ENCODE measurements at regions of chr10 and their contacts with region 1.

Region 1: GRCh38 chr10:21304203-21304602 is 221.3 kb downstream of the SKIDA1 start:
- DNase-seq: peak; percentile 83 to 86
- H3K4me3 ChIP-seq: no peak overlapping the region
- H3K4me3 Mint-ChIP-seq: peak overlapping the region; percentile 46
- H3K27ac Mint-ChIP-seq: peak overlapping the region; percentile 93
- H3K4me1 ChIP-seq: peaks cover 27% of the 10 kb centered on the region
- H3K4me1 Mint-ChIP-seq: peaks cover 41% of the 10 kb centered on the region
- H3K27me3 ChIP-seq: no peaks in the 10 kb centered on the region
- H3K27me3 Mint-ChIP-seq: no peaks in the 10 kb centered on the region
- CTCF ChIP-seq: no peak

Region 2: GRCh38 chr10:21166557-21167287 is 137.5 kb before region 1 on chr10:
- CTCF ChIA-PET with region 1: no interaction called
- POLR2A ChIA-PET with region 1: no interaction called
- intact Hi-C with region 1: no loop called
- DNase-seq: no peak
- H3K4me3 ChIP-seq: no peak overlapping the region
- H3K4me3 Mint-ChIP-seq: no peak overlapping the region
- H3K27ac Mint-ChIP-seq: no peak overlapping the region
- H3K4me1 ChIP-seq: peaks cover 53% of the 10 kb centered on the region
- H3K4me1 Mint-ChIP-seq: peaks cover 43% of the 10 kb centered on the region
- H3K27me3 ChIP-seq: no peaks in the 10 kb centered on the region
- H3K27me3 Mint-ChIP-seq: no peaks in the 10 kb centered on the region
- CTCF ChIP-seq: no peak

Region 3: DNA sequence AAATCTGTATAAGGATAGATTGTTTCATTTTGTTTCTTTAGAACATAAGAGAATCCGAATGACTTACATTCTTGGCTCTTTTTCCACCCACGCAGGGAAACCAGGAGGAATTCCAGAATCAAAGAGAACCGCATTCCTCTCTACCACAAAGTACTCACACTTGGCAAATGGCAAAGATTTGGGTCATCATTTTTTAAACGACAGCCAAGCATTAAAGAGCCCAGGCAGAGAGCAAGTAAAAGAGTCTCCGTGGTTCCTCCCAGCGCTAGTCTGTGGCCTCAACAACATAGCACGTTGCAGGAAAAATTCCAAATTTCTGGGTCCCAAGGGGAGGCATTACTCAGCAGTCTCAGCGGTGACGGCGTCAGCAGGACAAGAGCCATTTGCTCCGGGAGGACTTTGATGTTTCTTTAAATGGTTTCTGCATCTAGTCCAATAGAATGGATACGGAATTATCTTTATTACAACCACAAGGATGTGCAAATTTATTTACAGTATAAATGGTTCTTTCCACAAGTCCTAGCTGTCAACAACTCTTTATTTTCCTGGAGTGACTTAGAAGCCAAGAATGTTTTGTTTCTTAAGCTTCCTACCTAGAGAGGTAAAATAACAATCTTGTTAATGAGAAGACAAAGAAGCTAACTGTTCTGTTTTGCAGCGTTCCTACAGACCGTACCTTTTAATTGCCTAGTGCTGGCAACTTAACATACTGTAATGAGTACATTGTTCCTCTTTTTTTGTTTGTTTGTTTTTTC is 11.3 kb before region 1 on chr10:
- CTCF ChIA-PET with region 1: no interaction called
- POLR2A ChIA-PET with region 1: no interaction called
- intact Hi-C with region 1: loop called (anchors 1 kb)
- DNase-seq: peak; percentile 85
- H3K4me3 ChIP-seq: peak overlapping the region; percentile 29
- H3K4me3 Mint-ChIP-seq: peak overlapping the region; percentile 73
- H3K27ac Mint-ChIP-seq: peak overlapping the region; percentile 65
- H3K4me1 ChIP-seq: peaks cover 48% of the 10 kb centered on the region
- H3K4me1 Mint-ChIP-seq: peaks cover 40% of the 10 kb centered on the region
- H3K27me3 ChIP-seq: no peaks in the 10 kb centered on the region
- H3K27me3 Mint-ChIP-seq: no peaks in the 10 kb centered on the region
- CTCF ChIP-seq: no peak

Region 4: GRCh38 chr10:21315645-21316281 is 11.6 kb after region 1 on chr10:
- CTCF ChIA-PET with region 1: no interaction called
- POLR2A ChIA-PET with region 1: no interaction called
- intact Hi-C with region 1: loop called (anchors 1 kb)
- DNase-seq: peak; percentile 73 to 81
- H3K4me3 ChIP-seq: no peak overlapping the region
- H3K4me3 Mint-ChIP-seq: peak overlapping the region; percentile 28
- H3K27ac Mint-ChIP-seq: peak overlapping the region; percentile 75
- H3K4me1 ChIP-seq: peaks cover 31% of the 10 kb centered on the region
- H3K4me1 Mint-ChIP-seq: peaks cover 40% of the 10 kb centered on the region
- H3K27me3 ChIP-seq: no peaks in the 10 kb centered on the region
- H3K27me3 Mint-ChIP-seq: no peaks in the 10 kb centered on the region
- CTCF ChIP-seq: no peak

Region 5: GRCh38 chr10:21336476-21337170 is 32.4 kb after region 1 on chr10:
- CTCF ChIA-PET with region 1: no interaction called
- POLR2A ChIA-PET with region 1: interaction called, 4 read pairs
- intact Hi-C with region 1: loop called (anchors 1 kb)
- DNase-seq: peak; percentile 90 to 94
- H3K4me3 ChIP-seq: no peak overlapping the region
- H3K4me3 Mint-ChIP-seq: peak overlapping the region; percentile 30
- H3K27ac Mint-ChIP-seq: peak overlapping the region; percentile 91
- H3K4me1 ChIP-seq: peaks cover 47% of the 10 kb centered on the region
- H3K4me1 Mint-ChIP-seq: peaks cover 31% of the 10 kb centered on the region
- H3K27me3 ChIP-seq: no peaks in the 10 kb centered on the region
- H3K27me3 Mint-ChIP-seq: no peaks in the 10 kb centered on the region
- CTCF ChIP-seq: peak; percentile 11 to 19

Region 6: GRCh38 chr10:21355561-21356011 is 51.4 kb after region 1 on chr10:
- CTCF ChIA-PET with region 1: no interaction called
- POLR2A ChIA-PET with region 1: no interaction called
- intact Hi-C with region 1: loop called (anchors 1 kb)
- DNase-seq: no peak
- H3K4me3 ChIP-seq: no peak overlapping the region
- H3K4me3 Mint-ChIP-seq: no peak overlapping the region
- H3K27ac Mint-ChIP-seq: peak overlapping the region; percentile 4
- H3K4me1 ChIP-seq: peaks cover 41% of the 10 kb centered on the region
- H3K4me1 Mint-ChIP-seq: peaks cover 43% of the 10 kb centered on the region
- H3K27me3 ChIP-seq: no peaks in the 10 kb centered on the region
- H3K27me3 Mint-ChIP-seq: no peaks in the 10 kb centered on the region
- CTCF ChIP-seq: no peak

Region 7: GRCh38 chr10:21406595-21407193 is 102.5 kb after region 1 on chr10:
- CTCF ChIA-PET with region 1: no interaction called
- POLR2A ChIA-PET with region 1: interaction called, 11 read pairs
- intact Hi-C with region 1: no loop called
- DNase-seq: no peak
- H3K4me3 ChIP-seq: no peak overlapping the region
- H3K4me3 Mint-ChIP-seq: no peak overlapping the region
- H3K27ac Mint-ChIP-seq: peak overlapping the region; percentile 2
- H3K4me1 ChIP-seq: peaks cover 48% of the 10 kb centered on the region
- H3K4me1 Mint-ChIP-seq: peaks cover 33% of the 10 kb centered on the region
- H3K27me3 ChIP-seq: no peaks in the 10 kb centered on the region
- H3K27me3 Mint-ChIP-seq: no peaks in the 10 kb centered on the region
- CTCF ChIP-seq: no peak

Region 8: DNA sequence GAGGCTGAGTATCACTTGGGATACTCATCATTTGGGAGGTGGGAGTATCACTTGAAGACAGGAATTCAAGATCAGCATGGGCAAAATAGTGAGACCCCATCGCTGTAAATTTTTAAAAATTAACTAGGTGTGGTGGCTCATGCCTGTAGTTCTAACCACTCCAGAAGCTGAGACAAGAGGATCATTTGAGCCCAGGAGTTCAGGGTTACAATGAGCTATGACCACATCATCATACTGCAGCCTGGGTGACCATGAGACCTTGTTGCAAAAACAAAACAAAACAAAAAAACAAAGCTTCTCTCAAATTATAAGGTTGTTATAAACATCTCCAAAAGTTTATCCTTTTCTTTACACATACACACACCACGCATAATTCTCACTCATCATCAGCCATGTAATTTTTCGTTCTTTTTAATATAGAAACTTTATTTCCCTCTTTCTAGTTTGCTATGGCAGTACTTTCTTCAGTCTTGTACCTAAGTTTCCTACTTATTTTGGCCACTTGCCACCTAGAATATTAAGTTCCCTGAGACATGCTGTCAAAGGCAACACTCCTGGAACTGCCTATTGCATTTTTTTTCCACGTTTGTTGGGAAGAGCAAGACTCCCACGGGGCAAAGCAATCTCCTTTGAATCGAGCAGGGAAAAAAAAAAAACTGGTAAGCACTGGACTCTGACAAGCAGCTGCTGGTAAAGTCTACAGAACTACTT is 184.2 kb after region 1 on chr10:
- CTCF ChIA-PET with region 1: no interaction called
- POLR2A ChIA-PET with region 1: no interaction called
- intact Hi-C with region 1: no loop called
- DNase-seq: no peak
- H3K4me3 ChIP-seq: no peak overlapping the region
- H3K4me3 Mint-ChIP-seq: no peak overlapping the region
- H3K27ac Mint-ChIP-seq: no peak overlapping the region
- H3K4me1 ChIP-seq: peaks cover 3% of the 10 kb centered on the region; the same call in 1 of the 2 replicates
- H3K4me1 Mint-ChIP-seq: peaks cover 12% of the 10 kb centered on the region
- H3K27me3 ChIP-seq: no peaks in the 10 kb centered on the region
- H3K27me3 Mint-ChIP-seq: no peaks in the 10 kb centered on the region
- CTCF ChIP-seq: no peak

Measured in Caco-2 (cell line).